Lower leg skin (tissue), 4 donors: ENCODE measurements at regions of chr15 and their contacts with region 1.

Region 1: DNA sequence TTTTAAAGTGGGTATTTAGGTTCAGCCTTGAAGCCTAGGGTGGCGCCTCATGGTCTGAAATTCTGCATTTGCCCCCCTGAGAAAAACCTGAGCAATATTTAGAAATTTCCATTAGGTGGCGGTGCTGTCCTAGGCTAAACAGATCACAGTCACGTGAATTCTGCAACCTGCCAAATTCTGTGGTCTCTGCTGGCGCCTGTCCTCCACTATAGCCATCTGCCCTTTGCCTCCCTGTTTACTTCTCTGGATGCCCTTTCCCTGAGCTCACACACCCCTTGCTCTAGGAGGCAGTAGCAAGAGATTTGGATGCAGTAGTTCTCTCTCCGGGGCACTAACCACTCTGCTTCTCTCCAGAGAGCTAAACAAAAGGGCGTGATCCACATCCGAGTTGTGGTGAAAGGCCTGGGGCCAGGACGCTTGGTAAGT is 9.1 kb downstream of the MRPS11 start:
- DNase-seq: peak in 1 of 2 donors; percentile 58
- H3K4me3 ChIP-seq: no peak overlapping the region
- CTCF ChIP-seq: no peak
- POLR2A ChIP-seq: no peak

Region 2: DNA sequence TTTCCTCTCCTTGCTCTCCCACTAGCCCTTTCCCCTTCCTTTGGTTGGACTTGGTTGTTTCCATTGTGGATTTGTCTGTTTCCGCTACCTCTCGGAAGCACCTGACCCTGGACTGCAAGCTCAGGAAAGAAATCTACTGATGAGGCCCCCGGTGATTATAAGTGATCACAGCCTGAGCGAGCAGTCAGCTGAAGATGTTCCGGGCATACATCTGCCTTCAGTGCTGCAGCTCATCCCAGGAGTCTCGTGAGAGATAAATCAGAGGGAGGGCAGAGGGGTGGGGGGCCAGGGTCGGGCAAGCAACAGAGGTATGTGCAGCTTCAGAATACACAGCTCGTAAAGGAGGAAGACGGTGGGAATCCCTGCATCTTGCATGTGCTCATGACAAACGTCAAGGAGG is 111.5 kb before region 1 on chr15:
- intact Hi-C with region 1: no loop called
- DNase-seq: no peak
- H3K4me3 ChIP-seq: no peak overlapping the region
- CTCF ChIP-seq: no peak
- POLR2A ChIP-seq: no peak

Region 3: DNA sequence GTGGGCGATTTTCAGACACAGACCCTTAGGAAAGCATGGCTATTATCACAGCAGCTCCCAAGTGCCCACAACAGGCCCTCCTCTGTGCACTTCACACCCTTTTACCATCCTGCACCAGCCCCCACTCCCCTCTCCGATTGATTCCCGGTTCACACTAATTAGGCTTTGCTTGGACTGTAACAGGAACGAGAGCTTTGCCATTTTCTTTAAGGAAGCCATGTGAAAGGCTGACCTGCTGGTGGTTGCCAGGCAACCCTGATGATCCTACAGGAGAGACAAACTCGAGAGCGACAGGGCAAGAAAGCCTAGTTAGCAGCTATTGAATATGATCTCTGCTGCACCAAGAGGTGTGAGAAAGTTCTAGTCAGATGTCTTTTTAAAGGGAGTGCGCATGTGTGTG is 98.0 kb after region 1 on chr15:
- intact Hi-C with region 1: no loop called
- DNase-seq: no peak
- H3K4me3 ChIP-seq: no peak overlapping the region
- CTCF ChIP-seq: no peak
- POLR2A ChIP-seq: no peak

Region 4: DNA sequence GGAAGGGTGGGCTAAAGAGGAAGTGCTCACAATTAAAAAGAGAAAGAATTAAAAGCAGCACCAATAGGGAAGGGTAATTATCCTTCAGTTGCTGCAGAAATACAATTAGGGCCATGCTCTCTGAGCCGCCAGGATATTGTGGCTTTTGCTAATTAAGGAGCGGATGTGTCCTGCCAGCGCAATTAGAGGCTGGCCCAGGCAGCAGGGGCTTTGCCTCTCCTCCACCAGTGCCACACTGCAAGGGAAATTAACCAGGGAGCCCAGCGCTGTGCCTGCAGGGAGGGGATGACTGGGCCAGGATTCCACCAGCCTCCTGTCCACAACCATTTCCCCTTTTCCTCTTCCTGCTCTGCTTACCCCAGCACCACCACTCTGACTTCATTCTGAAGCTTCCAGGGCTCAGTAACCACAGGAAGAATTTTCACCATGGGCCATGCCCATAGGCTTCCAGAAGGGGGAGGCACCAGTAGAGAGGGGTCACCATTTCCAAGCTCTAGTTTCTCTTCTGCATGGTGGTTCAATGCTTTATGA is 134.1 kb after region 1 on chr15:
- intact Hi-C with region 1: loop called (anchors 10 kb)
- DNase-seq: no peak
- H3K4me3 ChIP-seq: no peak overlapping the region
- CTCF ChIP-seq: no peak
- POLR2A ChIP-seq: no peak